ENCODE measurements at regions of chr7 and their contacts with region 1.

Region 1: GRCh38 chr7:28626624-28627262 is 214.4 kb downstream of the CREB5 start:
- DNase-seq: peak; percentile 72
- H3K4me3 Mint-ChIP-seq: no peak overlapping the region
- H3K27ac Mint-ChIP-seq: no peak overlapping the region
- H3K4me1 Mint-ChIP-seq: peaks cover 50% of the 10 kb centered on the region
- H3K27me3 Mint-ChIP-seq: no peaks in the 10 kb centered on the region
- CTCF ChIP-seq: peak; percentile 91

Region 2: DNA sequence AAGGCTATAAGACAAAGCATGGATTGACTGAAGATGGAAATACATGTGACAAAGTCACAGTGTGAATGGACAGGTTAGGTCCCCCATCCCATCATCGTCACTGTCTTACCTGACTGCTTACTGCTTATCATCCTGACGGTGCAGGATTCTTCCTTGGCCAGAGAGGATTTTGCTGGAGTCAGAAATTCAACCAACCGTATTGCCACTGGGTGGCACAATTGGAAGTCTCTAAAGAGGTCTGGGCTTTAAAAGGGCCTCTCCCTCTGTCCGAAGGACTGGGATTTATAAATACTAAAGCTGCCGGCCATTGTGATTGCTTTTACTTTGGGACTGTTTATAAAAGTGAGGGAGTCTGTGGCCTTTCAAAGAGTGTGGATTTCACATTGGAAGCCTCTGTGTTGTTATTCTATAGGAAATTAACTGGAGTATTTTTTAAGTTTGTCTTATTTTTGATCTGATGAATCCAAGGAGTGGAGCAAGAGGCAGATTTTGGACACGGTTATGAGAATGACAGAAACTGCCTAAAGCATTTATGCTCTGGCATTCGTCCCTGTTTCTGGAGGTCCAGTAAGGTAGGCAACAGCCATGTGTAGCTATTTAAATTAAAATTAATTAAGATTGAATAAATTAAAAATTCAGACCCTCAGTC is 327.7 kb before region 1 on chr7:
- CTCF ChIA-PET with region 1: interaction called, 9 read pairs
- intact Hi-C with region 1: loop called (anchors 1 kb)
- DNase-seq: peak; percentile 74
- H3K4me3 Mint-ChIP-seq: no peak overlapping the region
- H3K27ac Mint-ChIP-seq: no peak overlapping the region
- H3K4me1 Mint-ChIP-seq: no peaks in the 10 kb centered on the region
- H3K27me3 Mint-ChIP-seq: no peaks in the 10 kb centered on the region
- CTCF ChIP-seq: peak; percentile 67

Region 3: DNA sequence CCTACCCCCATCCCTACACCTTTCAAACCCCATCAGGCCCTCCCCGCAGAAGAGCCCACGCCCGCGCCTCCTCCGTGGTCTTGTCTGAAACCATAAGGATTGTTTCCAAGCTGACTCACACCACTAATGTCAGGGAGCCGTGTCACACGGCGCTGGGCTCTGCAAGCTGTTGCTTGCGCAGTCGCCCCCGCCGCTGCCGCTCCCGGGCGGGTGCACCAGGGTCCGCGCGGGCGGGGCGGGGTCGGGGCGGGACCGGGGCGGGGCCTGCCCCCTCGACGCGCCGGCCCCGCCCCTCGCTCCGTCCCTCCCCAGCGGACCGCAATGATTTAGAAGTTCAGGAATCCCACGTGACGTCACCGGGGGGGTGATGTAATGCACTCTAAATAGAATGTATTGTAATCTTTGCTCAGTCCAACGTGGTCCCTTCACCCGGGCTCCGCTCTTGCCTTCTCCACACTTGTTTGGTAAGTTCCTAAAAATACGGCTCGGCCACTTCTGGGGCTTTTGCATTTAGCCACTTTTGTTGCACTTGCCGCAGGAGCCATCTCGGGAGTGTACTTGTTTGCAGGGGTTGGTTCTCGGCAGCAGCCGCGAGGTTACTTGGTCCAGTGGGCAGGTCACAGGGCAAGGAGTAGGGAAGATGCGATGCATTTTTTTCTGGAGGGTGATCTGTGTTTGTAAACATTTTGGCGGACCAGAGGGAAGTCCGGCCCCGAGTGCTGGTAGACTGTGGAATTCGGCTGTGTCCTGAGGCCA is 217.6 kb before region 1 on chr7:
- CTCF ChIA-PET with region 1: interaction called, 5 read pairs
- intact Hi-C with region 1: loop called (anchors 5 kb)
- DNase-seq: peak; percentile 98
- H3K4me3 Mint-ChIP-seq: peak overlapping the region; percentile 83
- H3K27ac Mint-ChIP-seq: peak overlapping the region; percentile 88
- H3K4me1 Mint-ChIP-seq: peaks cover 41% of the 10 kb centered on the region
- H3K27me3 Mint-ChIP-seq: no peaks in the 10 kb centered on the region
- CTCF ChIP-seq: no peak

Region 4: DNA sequence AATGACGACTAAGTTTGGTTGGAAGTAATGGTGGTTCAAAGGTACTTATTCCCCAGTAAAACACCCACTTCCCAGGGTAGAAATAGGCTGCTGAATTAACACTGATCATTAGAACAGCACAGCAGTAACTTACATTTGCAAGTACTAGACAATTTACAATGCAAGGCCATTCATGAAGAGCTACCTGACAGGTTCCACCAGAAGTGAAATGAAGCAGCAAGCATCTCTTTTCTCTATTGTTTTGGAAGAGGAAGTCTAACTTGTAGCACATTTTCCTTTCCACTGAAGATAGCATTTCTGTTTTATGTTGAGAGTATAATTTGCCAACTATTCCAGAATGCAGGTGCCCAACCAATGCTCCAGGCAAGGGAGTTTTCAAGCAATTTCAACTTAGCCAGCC is 68.5 kb before region 1 on chr7:
- CTCF ChIA-PET with region 1: interaction called, 3 read pairs
- intact Hi-C with region 1: loop called (anchors 5 kb)
- DNase-seq: peak; percentile 63
- H3K4me3 Mint-ChIP-seq: no peak overlapping the region
- H3K27ac Mint-ChIP-seq: peak overlapping the region; percentile 40
- H3K4me1 Mint-ChIP-seq: peaks cover 61% of the 10 kb centered on the region
- H3K27me3 Mint-ChIP-seq: no peaks in the 10 kb centered on the region
- CTCF ChIP-seq: no peak

Region 5: GRCh38 chr7:28608731-28609130 is 18.0 kb before region 1 on chr7:
- CTCF ChIA-PET with region 1: interaction called, 23 read pairs
- intact Hi-C with region 1: loop called (anchors 1 kb)
- DNase-seq: no peak
- H3K4me3 Mint-ChIP-seq: no peak overlapping the region
- H3K27ac Mint-ChIP-seq: peak overlapping the region; percentile 65
- H3K4me1 Mint-ChIP-seq: peaks cover 73% of the 10 kb centered on the region
- H3K27me3 Mint-ChIP-seq: no peaks in the 10 kb centered on the region
- CTCF ChIP-seq: no peak

Region 6: DNA sequence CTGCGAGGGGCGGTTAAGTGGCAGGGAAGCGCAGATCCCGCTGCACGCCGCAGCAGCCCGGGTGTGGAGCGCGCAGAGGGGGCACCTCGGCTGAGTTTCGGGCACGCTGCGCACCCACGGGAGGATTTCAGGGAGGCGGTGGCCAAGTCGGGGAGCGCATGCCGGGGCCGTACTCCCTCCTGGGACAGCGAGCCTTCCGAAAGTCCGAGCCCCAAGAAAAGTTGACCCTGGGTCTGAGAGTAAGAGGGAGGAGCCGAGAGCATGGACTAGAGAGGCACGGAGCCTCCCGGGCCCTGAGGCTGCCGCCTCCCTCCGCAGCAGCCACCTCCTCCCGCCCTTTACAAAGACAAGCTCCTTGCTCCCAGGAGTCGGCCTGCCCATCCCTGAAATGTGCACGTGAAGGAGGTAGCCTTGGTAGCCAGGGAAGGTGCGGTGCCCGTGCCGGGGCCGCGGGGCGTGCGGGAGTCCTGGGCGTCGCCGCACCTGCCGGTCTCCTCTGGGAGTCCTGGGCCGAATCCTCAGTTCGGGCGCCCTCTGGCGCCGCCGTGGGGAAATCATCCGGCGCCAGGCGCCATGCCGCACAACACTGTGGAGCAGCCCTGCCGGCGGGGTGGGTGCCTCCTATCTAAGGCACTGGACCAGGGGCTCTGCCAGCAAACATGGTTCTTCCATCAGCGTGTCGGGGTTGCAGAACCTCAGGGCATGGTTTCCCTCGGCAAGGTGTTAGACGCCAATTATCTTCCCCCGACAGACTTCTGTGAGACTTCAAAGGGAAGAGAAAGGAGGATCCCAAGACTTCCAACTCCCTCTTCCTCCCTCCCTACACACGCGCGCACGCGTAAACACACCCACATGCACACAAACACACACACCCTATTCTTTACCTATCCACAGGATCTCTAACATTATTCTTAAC is 227.3 kb after region 1 on chr7:
- CTCF ChIA-PET with region 1: interaction called, 4 read pairs
- intact Hi-C with region 1: loop called (anchors 5 kb)
- DNase-seq: peak; percentile 97
- H3K4me3 Mint-ChIP-seq: peak overlapping the region; percentile 96
- H3K27ac Mint-ChIP-seq: peak overlapping the region; percentile 60
- H3K4me1 Mint-ChIP-seq: peaks cover 45% of the 10 kb centered on the region
- H3K27me3 Mint-ChIP-seq: no peaks in the 10 kb centered on the region
- CTCF ChIP-seq: peak; percentile 95

Measured in Calu3 (cell line).